ENCODE measurements at regions of chr17 and their contacts with region 1.

Region 1: DNA sequence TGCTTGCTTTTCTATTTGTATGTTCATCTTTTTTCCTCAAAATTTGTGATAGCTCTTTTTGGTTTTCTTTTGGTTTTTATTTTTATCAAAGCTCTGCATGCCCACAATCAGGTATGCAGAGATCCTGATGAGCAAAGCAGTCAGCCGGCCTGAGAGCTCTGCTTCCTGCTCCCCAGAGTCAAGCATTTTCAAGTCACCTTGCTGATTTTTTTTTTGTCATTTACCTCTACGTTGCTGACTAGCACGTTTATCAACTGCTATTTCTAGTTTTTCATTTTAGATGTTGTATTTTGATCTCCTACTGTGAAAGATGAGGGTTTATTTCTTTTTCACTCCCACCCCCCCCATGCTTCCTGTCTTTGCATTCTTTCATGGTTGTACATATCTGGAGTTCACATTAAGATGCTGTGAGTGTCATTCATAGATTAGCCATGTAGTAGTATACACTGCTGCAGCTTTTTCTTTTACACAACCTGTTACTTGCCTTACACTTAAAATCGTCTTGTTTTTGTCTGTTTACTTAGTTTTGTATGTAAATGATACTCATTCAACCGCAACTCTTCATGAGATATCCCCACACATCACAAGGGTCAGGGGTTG is 196.2 kb downstream of the LGALS9B start:
- DNase-seq: peak; percentile 42
- H3K4me3 Mint-ChIP-seq: peak overlapping the region; percentile 54
- H3K27ac Mint-ChIP-seq: peak overlapping the region; percentile 92
- H3K4me1 Mint-ChIP-seq: peaks cover 82% of the 10 kb centered on the region
- H3K27me3 Mint-ChIP-seq: no peaks in the 10 kb centered on the region

Region 2: GRCh38 chr17:20121359-20122253 is 149.5 kb before region 1 on chr17:
- CTCF ChIA-PET with region 1: no interaction called
- POLR2A ChIA-PET with region 1: no interaction called
- DNase-seq: peak; percentile 71
- H3K4me3 Mint-ChIP-seq: no peak overlapping the region
- H3K27ac Mint-ChIP-seq: no peak overlapping the region
- H3K4me1 Mint-ChIP-seq: peaks cover 2% of the 10 kb centered on the region
- H3K27me3 Mint-ChIP-seq: peaks cover 10% of the 10 kb centered on the region

Region 3: DNA sequence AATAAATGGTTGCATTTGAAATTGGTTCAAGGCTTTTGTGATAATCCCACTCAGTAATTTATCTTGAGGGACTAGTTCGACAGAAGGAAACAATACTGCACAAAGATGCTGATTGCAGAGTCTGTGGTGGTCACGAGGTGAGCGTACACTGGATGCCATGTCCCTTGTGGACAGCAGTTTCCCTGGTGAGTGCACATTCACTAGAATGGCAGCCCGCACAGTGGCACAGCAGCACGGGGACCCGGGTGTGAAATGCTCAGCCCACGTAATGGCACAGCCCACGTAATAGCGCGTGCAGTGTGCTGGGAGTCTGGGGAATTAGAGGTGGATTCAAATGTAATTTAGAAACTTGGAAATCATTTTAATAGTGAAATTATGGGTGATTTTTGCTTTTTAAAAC is 42.2 kb after region 1 on chr17:
- CTCF ChIA-PET with region 1: no interaction called
- POLR2A ChIA-PET with region 1: no interaction called
- DNase-seq: no peak
- H3K4me3 Mint-ChIP-seq: no peak overlapping the region
- H3K27ac Mint-ChIP-seq: no peak overlapping the region
- H3K4me1 Mint-ChIP-seq: no peaks in the 10 kb centered on the region
- H3K27me3 Mint-ChIP-seq: no peaks in the 10 kb centered on the region

Region 4: DNA sequence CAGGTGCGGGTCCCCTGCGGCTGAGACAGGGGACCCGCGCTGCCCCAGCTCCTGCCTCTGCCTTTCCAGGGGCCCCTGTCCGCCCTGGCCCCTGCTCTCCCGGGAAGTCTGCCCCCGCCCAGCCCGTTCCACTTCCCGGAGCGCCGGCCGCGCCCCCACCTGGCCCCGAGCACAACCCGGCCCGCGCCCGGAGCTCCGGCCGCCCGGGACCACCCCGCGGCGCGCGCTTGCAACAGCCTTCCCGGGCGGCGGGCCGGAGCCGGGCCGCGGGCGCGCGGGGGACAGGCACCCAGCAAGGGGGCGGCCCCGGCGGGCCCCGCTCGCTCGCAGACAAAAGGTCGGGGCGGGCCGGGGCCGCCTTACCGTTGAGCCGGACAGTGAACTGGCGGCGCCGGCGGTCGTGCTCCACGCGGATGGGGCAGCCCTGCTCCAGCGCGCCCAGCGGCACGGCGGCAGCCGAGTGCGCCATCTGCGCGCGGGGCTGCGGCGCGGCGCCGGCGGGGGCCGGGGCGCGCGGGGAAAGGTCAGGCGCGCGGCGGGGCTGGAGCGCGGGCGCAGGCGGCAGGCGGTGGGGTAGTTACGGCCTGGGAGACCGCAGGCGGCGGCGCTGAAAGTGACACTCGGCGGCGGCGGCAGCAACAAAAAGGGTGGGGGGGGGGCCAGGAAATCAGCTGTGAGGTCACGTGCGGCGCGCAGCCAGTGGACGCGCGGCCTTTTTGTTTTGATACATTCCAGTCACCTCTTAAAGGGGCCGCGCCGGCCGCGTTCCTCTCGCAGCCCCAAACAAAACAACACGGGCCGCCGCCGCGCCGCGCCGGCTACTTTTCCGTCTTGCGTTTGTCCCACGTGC is 981.9 kb after region 1 on chr17 and contains the start of gene NATD1:
- CTCF ChIA-PET with region 1: no interaction called
- POLR2A ChIA-PET with region 1: interaction called, 15 read pairs
- DNase-seq: peak; percentile 82
- H3K4me3 Mint-ChIP-seq: peak within 1 kb of the TSS; percentile 80
- H3K27ac Mint-ChIP-seq: peak within 1 kb of the TSS; percentile 86
- H3K4me1 Mint-ChIP-seq: peaks cover 17% of the 10 kb centered on the region
- H3K27me3 Mint-ChIP-seq: peaks cover 5% of the 10 kb centered on the region
- total RNA-seq, gene NATD1: 3.0 to 3.2 TPM

Measured in activated CD4-positive, alpha-beta T cell treated with anti-CD3 and anti-CD28 coated beads, Interleukin-2, amount 10 ng/mL, durations not matched to agents 7 days and 5 days (primary cell).